ENCODE measurements at regions of chr13 and their contacts with region 1.

Region 1: GRCh38 chr13:75760131-75761021 is 124.2 kb downstream of the LMO7 start:
- DNase-seq: peak; percentile 15
- H3K4me3 Mint-ChIP-seq: peak overlapping the region; percentile 40
- H3K27ac Mint-ChIP-seq: no peak overlapping the region
- H3K4me1 Mint-ChIP-seq: peaks cover 62% of the 10 kb centered on the region
- H3K27me3 Mint-ChIP-seq: peaks cover 3% of the 10 kb centered on the region

Region 2: GRCh38 chr13:75326173-75327134 is 433.9 kb before region 1 on chr13:
- CTCF ChIA-PET with region 1: no interaction called
- POLR2A ChIA-PET with region 1: no interaction called
- intact Hi-C with region 1: loop called (anchors 5 kb)
- DNase-seq: peak; percentile 78
- H3K4me3 Mint-ChIP-seq: peak overlapping the region; percentile 89
- H3K27ac Mint-ChIP-seq: peak overlapping the region; percentile 95
- H3K4me1 Mint-ChIP-seq: peaks cover 35% of the 10 kb centered on the region
- H3K27me3 Mint-ChIP-seq: no peaks in the 10 kb centered on the region

Region 3: GRCh38 chr13:75549262-75550158 is 210.9 kb before region 1 on chr13 and contains the start of gene UCHL3:
- CTCF ChIA-PET with region 1: no interaction called
- POLR2A ChIA-PET with region 1: no interaction called
- intact Hi-C with region 1: loop called (anchors 5 kb)
- DNase-seq: peak; percentile 98
- H3K4me3 Mint-ChIP-seq: peak within 1 kb of the TSS; percentile 97
- H3K27ac Mint-ChIP-seq: peak within 1 kb of the TSS; percentile 95
- H3K4me1 Mint-ChIP-seq: peaks cover 35% of the 10 kb centered on the region
- H3K27me3 Mint-ChIP-seq: no peaks in the 10 kb centered on the region
- total RNA-seq, gene UCHL3: 39.1 to 42.6 TPM

Region 4: DNA sequence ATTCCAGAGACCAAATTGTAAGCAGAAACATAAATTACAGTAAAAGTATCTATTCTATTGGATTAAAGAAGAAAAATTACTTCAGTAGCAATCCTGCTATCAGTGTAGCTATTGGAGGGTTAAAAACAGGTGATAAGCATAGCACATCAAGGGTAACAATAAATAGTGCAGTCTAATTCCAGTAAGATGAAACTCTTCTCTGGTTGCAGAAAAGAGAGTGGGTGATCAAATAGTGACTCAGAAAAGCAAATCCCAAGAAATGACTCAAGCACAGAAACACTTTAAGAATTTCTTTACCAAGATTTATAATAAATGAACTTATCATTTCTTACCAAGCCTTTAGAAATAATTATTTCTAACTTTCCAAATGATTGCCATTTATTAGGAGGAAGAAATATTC is 11.4 kb after region 1 on chr13:
- CTCF ChIA-PET with region 1: interaction called, 4 read pairs
- POLR2A ChIA-PET with region 1: no interaction called
- intact Hi-C with region 1: loop called (anchors 1 kb)
- DNase-seq: no peak
- H3K4me3 Mint-ChIP-seq: no peak overlapping the region
- H3K27ac Mint-ChIP-seq: no peak overlapping the region
- H3K4me1 Mint-ChIP-seq: peaks cover 23% of the 10 kb centered on the region
- H3K27me3 Mint-ChIP-seq: no peaks in the 10 kb centered on the region

Region 5: GRCh38 chr13:75870397-75870903 is 110.1 kb after region 1 on chr13:
- CTCF ChIA-PET with region 1: interaction called, 15 read pairs
- POLR2A ChIA-PET with region 1: no interaction called
- intact Hi-C with region 1: loop called (anchors 1 kb)
- DNase-seq: peak; percentile 15
- H3K4me3 Mint-ChIP-seq: peak overlapping the region; percentile 54
- H3K27ac Mint-ChIP-seq: no peak overlapping the region
- H3K4me1 Mint-ChIP-seq: peaks cover 20% of the 10 kb centered on the region
- H3K27me3 Mint-ChIP-seq: peaks cover 2% of the 10 kb centered on the region

Measured in activated CD4-positive, alpha-beta memory T cell treated with anti-CD3 and anti-CD28 coated beads for 36 hours (primary cell).